ENCODE measurements at regions of chr7 and their contacts with region 1.

Region 1: DNA sequence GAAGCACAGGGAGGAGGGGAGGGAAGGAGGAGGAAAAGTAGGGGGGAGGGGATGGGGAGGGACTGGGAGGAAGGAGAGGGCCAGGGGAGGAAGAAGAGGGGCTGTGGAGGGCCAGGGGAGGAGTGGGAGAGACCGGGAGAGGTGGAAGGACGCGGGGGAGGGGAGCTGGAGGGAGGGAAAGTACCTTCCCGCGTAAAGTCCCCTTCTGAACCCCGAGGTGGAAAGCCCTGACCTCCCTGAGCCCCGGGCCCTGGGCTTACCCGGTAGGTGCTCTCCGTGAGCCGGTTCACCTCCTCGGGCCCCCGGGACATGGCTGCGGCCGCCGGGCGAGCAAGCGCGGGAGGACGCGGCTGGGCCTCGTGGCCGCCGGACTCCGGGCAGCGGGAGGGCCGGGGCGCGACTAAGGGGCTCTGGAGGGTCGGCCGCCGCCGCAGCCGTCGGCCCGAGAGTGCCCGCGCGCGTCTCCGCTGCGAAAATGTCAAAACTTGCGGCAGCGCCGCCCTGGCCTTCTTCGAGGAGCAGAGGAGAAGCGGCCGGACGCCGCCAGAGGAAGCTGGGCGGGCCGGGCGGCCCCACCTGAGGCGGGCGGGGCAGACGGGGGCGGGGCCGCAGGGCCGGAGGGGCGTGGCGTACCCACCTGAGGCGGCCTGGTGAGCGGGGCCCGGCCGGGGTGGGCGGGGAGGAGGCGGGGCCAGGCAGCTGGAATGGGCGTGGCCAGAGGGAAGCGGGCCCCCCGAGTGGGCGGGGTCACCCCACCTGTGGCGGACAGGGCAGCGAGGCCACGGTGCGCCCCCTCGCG is at the start of gene BAIAP2L1:
- DNase-seq: no peak
- H3K4me3 ChIP-seq: peak within 1 kb of the TSS; percentile 69
- H3K27me3 ChIP-seq: no peaks in the 10 kb centered on the region; the same call in 1 of the 2 replicates
- CTCF ChIP-seq: no peak; the same call in 1 of the 2 replicates
- polyA plus RNA-seq, gene BAIAP2L1: 8.8 and 11.4 TPM in 2 replicates

Region 2: GRCh38 chr7:97971990-97972943 is 428.5 kb before region 1 on chr7:
- CTCF ChIA-PET with region 1: no interaction called
- POLR2A ChIA-PET with region 1: no interaction called
- DNase-seq: peak; percentile 8
- H3K4me3 ChIP-seq: peak overlapping the region; percentile 86
- H3K27me3 ChIP-seq: no peaks in the 10 kb centered on the region
- CTCF ChIP-seq: peak; percentile 60

Region 3: DNA sequence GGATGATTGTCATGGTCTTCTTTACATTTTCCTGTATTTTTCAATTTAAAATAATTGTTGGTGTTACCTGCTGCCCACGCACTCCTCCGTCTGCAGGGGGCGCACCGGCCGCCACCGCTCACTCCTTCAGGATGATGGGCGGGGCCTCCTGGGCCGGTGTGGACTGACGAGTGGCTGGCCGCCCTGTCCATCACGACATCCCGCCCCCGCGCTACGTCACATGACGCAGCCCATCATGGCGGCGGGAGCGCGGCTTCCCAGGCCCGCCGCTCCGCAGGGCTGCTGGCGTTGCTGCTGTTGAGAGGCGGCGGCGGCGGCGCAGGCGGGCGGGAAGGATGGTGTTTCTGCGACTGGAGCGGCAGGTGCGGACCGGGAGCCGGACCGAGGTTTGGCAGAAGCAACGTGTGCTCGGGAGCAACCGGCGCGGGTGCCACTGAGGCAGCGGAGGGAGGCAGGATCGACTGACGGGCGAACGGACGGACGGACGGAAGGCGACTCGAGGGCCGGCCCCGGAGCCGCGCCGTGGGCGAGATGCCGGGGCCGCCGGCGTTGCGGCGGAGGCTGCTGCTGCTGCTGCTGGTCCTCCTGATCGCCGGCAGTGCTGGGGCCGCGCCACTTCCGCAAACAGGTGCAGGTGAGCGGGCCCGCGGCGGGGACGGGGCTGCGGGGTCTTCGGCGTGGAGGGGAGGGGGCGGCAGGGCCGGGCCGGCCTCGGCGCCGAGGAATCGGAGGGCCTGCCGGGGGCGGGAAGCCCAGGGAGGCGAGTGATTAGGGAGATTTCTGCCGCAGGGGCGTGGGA is 293.9 kb before region 1 on chr7 and contains the start of gene LMTK2:
- CTCF ChIA-PET with region 1: no interaction called
- POLR2A ChIA-PET with region 1: no interaction called
- DNase-seq: peak; percentile 38
- H3K4me3 ChIP-seq: peak within 1 kb of the TSS; percentile 89
- H3K27me3 ChIP-seq: no peaks in the 10 kb centered on the region
- CTCF ChIP-seq: peak; percentile 96
- polyA plus RNA-seq, gene LMTK2: 3.0 and 3.8 TPM in 2 replicates

Region 4: GRCh38 chr7:98266840-98267239 is 133.9 kb before region 1 on chr7:
- CTCF ChIA-PET with region 1: interaction called, 16 read pairs
- POLR2A ChIA-PET with region 1: no interaction called
- DNase-seq: no peak
- H3K4me3 ChIP-seq: no peak overlapping the region
- H3K27me3 ChIP-seq: no peaks in the 10 kb centered on the region
- CTCF ChIP-seq: peak; percentile 54

Region 5: DNA sequence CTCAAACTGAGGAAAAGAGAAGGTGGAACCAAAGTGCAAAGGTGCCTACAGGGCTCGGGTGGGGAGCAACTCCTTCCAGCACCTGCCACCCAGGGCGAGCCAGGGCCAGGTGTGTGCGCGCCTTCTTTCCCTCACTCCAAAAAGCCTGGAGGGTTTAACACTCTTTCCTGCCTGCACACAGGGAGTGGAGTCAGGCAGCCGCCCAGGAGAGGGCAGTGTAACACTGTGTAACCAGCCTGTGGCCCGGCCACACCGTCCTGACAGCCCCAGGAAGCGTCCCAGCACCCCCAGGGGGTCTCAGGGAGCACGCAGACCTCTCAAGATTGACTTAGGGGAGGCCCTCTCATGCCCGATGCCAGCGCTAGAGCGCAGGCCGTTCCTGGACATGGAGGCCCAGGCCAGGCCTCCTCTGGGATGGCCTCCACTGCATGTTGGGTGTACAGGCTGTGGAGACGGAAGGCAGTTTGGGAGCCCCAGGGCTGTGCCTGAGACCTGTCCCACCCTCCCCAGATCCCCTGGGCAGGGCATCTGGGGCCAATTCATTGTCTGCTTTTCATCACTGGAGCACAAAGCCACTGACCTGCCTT is 105.9 kb before region 1 on chr7:
- CTCF ChIA-PET with region 1: interaction called, 49 read pairs
- POLR2A ChIA-PET with region 1: no interaction called
- DNase-seq: no peak
- H3K4me3 ChIP-seq: no peak overlapping the region
- H3K27me3 ChIP-seq: no peaks in the 10 kb centered on the region
- CTCF ChIP-seq: peak; percentile 81

Region 6: GRCh38 chr7:98372993-98373392 is 27.7 kb before region 1 on chr7:
- CTCF ChIA-PET with region 1: no interaction called
- POLR2A ChIA-PET with region 1: no interaction called
- DNase-seq: no peak
- H3K4me3 ChIP-seq: no peak overlapping the region
- H3K27me3 ChIP-seq: no peaks in the 10 kb centered on the region
- CTCF ChIP-seq: no peak

Region 7: DNA sequence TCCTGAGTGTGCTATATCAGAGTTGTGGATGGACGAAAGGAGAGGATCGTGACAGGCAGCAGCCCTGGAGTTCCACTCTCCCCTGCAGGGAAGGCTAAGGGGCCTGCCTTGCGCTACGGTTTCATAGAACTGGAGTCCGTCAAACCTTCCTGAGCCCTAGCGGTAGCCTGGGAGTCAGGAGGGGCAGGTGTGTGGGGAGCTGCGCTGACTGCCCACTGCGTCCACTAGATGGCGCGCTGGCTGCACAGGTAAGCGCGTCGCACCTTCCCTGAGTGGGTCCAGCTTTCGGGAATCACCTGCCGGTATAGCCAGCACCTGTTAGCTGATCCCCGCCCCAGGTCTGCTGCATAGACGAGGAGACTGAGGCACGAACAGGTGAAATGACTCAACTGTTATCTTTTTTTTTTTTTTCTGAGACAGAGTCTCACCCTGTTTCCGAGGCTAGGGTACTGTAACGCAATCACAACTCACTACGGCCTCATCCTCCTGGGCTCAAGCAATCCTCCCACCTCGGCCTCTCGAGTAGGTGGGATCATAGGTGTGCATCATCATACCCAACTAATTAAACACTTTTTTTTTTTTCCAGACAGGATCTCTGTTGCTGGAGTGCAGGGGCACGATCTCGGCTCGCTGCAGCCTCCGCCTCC is 20.3 kb after region 1 on chr7:
- CTCF ChIA-PET with region 1: interaction called, 33 read pairs
- POLR2A ChIA-PET with region 1: no interaction called
- DNase-seq: no peak
- H3K4me3 ChIP-seq: no peak overlapping the region
- H3K27me3 ChIP-seq: no peaks in the 10 kb centered on the region
- CTCF ChIP-seq: peak; percentile 93